ENCODE measurements at regions of chr3 and their contacts with region 1.

Region 1: GRCh38 chr3:62622553-62623193 is 249.3 kb upstream of the FEZF2 start:
- DNase-seq: peak; percentile 5
- ATAC-seq: no peak
- H3K4me3 Mint-ChIP-seq: no peak overlapping the region
- H3K27ac Mint-ChIP-seq: no peak overlapping the region
- H3K4me1 Mint-ChIP-seq: no peaks in the 10 kb centered on the region
- H3K27me3 Mint-ChIP-seq: peaks cover 12% of the 10 kb centered on the region
- CTCF ChIP-seq: peak; percentile 52

Region 2: DNA sequence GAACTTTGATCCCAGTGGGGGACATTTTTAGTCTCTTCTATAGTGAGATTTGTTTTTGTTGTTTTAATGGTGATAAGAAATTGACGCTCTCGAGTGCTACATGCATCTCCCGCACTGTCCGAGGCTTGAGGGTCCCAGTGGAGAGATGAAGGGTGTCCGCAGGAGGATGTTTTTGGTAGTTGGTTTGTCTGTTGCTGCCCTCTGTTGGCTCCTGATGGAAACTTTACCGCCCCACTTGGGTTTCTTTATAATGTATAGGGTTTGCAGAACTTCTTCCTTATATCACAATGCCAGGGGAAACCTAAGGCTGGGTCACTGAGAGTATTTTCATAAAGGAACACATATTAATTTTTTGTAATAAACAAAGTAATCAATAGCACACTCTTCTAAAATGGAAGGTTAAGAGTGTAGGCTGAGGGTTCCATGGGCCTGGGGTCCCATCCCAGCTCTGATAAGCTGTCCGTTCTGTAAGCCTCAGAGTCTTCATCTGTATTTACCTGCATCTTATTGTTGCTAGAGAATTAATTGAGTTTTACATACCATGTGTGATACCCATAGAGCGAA is 64.0 kb before region 1 on chr3:
- CTCF ChIA-PET with region 1: no interaction called
- POLR2A ChIA-PET with region 1: no interaction called
- intact Hi-C with region 1: no loop called
- DNase-seq: peak; percentile 14
- ATAC-seq: no peak
- H3K4me3 Mint-ChIP-seq: no peak overlapping the region
- H3K27ac Mint-ChIP-seq: no peak overlapping the region
- H3K4me1 Mint-ChIP-seq: no peaks in the 10 kb centered on the region
- H3K27me3 Mint-ChIP-seq: no peaks in the 10 kb centered on the region
- CTCF ChIP-seq: peak; percentile 46

Region 3: GRCh38 chr3:63228087-63229023 is 605.7 kb after region 1 on chr3:
- CTCF ChIA-PET with region 1: interaction called, 5 read pairs
- POLR2A ChIA-PET with region 1: no interaction called
- intact Hi-C with region 1: loop called (anchors 10 kb)
- DNase-seq: peak; percentile 6
- ATAC-seq: no peak
- H3K4me3 Mint-ChIP-seq: no peak overlapping the region
- H3K27ac Mint-ChIP-seq: no peak overlapping the region
- H3K4me1 Mint-ChIP-seq: no peaks in the 10 kb centered on the region
- H3K27me3 Mint-ChIP-seq: no peaks in the 10 kb centered on the region
- CTCF ChIP-seq: peak; percentile 40